Sigmoid colon (tissue), 7 donors: ENCODE measurements at regions of chr10 and their contacts with region 1.

Region 1: GRCh38 chr10:80453701-80454513 is at the start of gene TSPAN14:
- DNase-seq: peak; percentile 95
- H3K4me3 ChIP-seq: peak within 1 kb of the TSS; percentile 76 to 97 (median 89)
- H3K27ac ChIP-seq: peak within 1 kb of the TSS; percentile 96 to 100 (median 98)
- H3K4me1 ChIP-seq: peaks cover 0 to 42% (median 36%) of the 10 kb centered on the region in 4 donors
- H3K27me3 ChIP-seq: no peaks in the 10 kb centered on the region
- CTCF ChIP-seq: no peak
- EP300 ChIP-seq: no peak
- POLR2A ChIP-seq: peak in 1 of 2 donors; percentile 42
- total RNA-seq, gene TSPAN14: 22.0 to 29.9 (median 23.9) TPM

Region 2: DNA sequence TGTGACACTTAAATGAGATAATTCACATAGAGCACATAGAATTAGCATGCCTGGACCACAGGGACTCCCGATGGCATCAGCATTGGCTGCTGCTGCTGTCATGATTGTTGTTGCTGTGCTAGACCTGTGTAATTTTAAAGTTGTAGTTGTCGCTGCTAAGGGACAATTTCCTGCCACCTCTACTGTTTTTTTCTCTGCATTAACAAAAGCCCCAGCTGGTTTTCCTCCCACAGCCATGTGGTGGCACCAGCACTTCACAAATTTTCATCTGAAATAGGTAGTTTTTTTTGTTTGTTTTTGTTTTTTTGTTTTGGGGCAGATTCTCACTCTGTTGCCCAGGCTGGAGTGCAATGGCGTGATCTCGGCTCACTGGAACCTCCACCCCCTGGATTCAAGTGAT is 70.9 kb before region 1 on chr10:
- intact Hi-C with region 1: loop called (anchors 5 kb)
- DNase-seq: no peak
- H3K4me3 ChIP-seq: no peak overlapping the region
- H3K27ac ChIP-seq: no peak overlapping the region
- H3K4me1 ChIP-seq: no peaks in the 10 kb centered on the region
- H3K27me3 ChIP-seq: no peaks in the 10 kb centered on the region
- CTCF ChIP-seq: peak; percentile 39 to 49 (median 46)
- EP300 ChIP-seq: no peak
- POLR2A ChIP-seq: no peak

Region 3: GRCh38 chr10:80413271-80413996 is 40.5 kb before region 1 on chr10:
- intact Hi-C with region 1: loop called (anchors 5 kb)
- DNase-seq: no peak
- H3K4me3 ChIP-seq: no peak overlapping the region
- H3K27ac ChIP-seq: peak overlapping the region; percentile 0 to 87 (median 64)
- H3K4me1 ChIP-seq: peaks cover 0 to 86% (median 80%) of the 10 kb centered on the region in 4 donors
- H3K27me3 ChIP-seq: no peaks in the 10 kb centered on the region
- CTCF ChIP-seq: no peak
- EP300 ChIP-seq: no peak
- POLR2A ChIP-seq: no peak

Region 4: GRCh38 chr10:80498833-80499741 is 45.2 kb after region 1 on chr10:
- intact Hi-C with region 1: loop called (anchors 1 kb)
- DNase-seq: peak; percentile 99
- H3K4me3 ChIP-seq: no peak overlapping the region
- H3K27ac ChIP-seq: peak overlapping the region; percentile 77 to 90 (median 82)
- H3K4me1 ChIP-seq: peaks cover 0 to 61% (median 53%) of the 10 kb centered on the region in 4 donors
- H3K27me3 ChIP-seq: no peaks in the 10 kb centered on the region
- CTCF ChIP-seq: no peak
- EP300 ChIP-seq: peak in 2 of 4 donors; percentile 56 to 68
- POLR2A ChIP-seq: no peak